ENCODE measurements at regions of chr3 and their contacts with region 1.

Region 1: GRCh38 chr3:149765762-149766334 is 13.6 kb upstream of the COMMD2 start:
- DNase-seq: peak in 1 of 2 experiments; percentile 48
- ATAC-seq: peak; percentile 55 to 81; a peak in 4 of 6 replicates
- H3K4me3 ChIP-seq: no peak overlapping the region
- H3K27ac ChIP-seq: no peak overlapping the region
- H3K4me1 ChIP-seq: 0 out of 3 replicates have a peak, but pooled peaks cover 2% of the 10 kb centered on the region
- CTCF ChIP-seq: peak; percentile 73
- EP300 ChIP-seq: no peak
- POLR2A ChIP-seq: no peak
- RAD21 ChIP-seq: peak; percentile 72 to 74

Region 2: DNA sequence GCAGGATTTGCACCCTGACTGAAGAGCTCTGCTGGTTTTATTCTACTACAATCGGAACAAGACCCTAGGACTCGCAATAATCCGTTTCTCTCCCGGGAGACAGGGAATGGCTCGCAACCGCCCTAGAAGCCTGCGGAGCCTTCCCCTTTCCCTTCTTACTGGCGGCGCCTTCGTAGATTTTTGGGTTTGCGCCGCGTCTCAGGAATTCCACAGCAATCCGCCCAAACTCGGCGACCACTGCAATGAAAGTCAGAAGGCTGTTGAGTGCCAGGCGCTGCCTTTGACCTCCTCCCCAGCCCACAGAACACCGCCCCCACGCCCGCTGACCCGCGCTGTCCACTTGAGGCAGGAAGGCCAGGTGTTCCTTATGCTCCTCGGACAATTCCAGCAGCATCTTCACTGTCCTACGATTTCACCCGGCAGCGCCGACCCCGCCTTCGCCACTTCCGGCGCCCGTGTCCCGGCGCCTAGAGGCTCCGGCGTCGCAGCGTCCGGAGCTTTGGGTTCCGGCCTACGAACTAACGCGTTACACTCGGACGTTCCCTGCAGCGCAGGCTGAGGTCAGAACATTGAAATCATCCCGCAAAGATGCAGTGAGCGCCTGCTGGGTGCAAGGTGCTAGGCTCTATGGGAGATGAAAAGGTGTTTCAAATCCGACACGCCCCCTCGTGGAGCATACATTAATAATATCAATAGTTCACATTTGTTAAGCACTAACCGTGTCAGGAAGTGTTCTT is 13.6 kb before region 1 on chr3 and contains the start of gene COMMD2:
- CTCF ChIA-PET with region 1: interaction called, 24 read pairs
- POLR2A ChIA-PET with region 1: no interaction called
- DNase-seq: peak; percentile 82 to 94
- ATAC-seq: peak; percentile 100
- H3K4me3 ChIP-seq: peak within 1 kb of the TSS; percentile 76
- H3K27ac ChIP-seq: peak within 1 kb of the TSS; percentile 87 to 96
- H3K4me1 ChIP-seq: peaks cover 18% of the 10 kb centered on the region; the same call in 2 of the 3 replicates
- CTCF ChIP-seq: peak; percentile 44; the same call in 2 of the 3 replicates
- EP300 ChIP-seq: no peak
- POLR2A ChIP-seq: peak; percentile 86
- RAD21 ChIP-seq: peak; percentile 53 to 65; a peak in 4 of 5 replicates
- polyA plus RNA-seq, gene COMMD2: 71.5 and 76.1 TPM in 2 replicates

Region 3: DNA sequence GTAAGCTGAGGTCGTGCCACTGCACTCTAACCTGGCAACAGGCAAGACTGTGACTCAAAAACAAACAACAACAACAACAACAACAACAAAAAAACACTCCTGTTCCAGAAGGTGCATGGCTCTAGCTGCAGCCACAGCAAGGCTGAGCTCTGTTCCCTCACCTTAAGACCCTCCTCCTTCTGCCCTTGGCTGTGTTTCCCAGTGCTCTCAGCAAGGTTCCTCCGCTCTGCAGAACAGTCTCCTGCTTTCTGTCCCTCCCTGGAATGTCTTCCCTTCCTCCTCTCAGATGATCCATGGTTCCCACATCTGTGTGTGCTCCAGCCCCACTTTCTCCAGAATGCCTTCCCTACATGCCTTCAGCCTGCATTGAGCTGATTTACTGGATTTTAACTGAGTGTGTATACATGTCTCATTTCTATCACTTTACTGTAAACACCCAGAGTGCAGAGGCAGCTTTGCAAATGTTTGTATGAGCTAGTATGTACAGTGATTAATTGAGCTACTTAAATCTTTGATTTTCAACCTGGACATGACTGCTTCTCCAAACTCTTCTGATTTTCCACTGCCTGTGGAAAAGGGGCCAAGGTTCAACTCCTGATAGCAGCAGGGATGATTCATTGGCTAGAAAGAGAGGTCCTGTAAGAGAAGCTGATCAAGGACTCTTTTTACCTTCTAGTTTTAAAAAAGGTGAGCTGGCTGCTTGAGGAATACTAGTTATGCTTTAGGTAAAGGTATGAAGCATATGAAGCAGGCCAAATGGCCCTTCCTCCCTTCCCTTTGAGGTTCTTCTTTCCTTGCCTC is 11.8 kb after region 1 on chr3:
- CTCF ChIA-PET with region 1: interaction called, 30 read pairs
- POLR2A ChIA-PET with region 1: no interaction called
- DNase-seq: no peak
- ATAC-seq: peak in 1 of 2 experiments; percentile 42; a peak in 2 of 6 replicates
- H3K4me3 ChIP-seq: no peak overlapping the region
- H3K27ac ChIP-seq: no peak overlapping the region
- H3K4me1 ChIP-seq: no peaks in the 10 kb centered on the region
- CTCF ChIP-seq: no peak
- EP300 ChIP-seq: no peak
- POLR2A ChIP-seq: no peak
- RAD21 ChIP-seq: no peak

Measured in A549 (cell line).